Mammary epithelial cell (primary cell): ENCODE measurements at regions of chr11 and their contacts with region 1.

Region 1: GRCh38 chr11:19259487-19260345 is 19.0 kb upstream of the E2F8 start:
- DNase-seq: peak; percentile 36
- H3K4me3 ChIP-seq: no peak overlapping the region
- H3K27ac ChIP-seq: no peak overlapping the region
- H3K4me1 ChIP-seq: no peaks in the 10 kb centered on the region
- H3K27me3 ChIP-seq: no peaks in the 10 kb centered on the region
- CTCF ChIP-seq: peak; percentile 94 to 99

Region 2: GRCh38 chr11:19173004-19173689 is 86.6 kb before region 1 on chr11:
- CTCF ChIA-PET with region 1: no interaction called
- dilution Hi-C with region 1: no loop called
- in situ Hi-C with region 1: no loop called
- intact Hi-C with region 1: loop called (anchors 5 kb)
- DNase-seq: no peak
- H3K4me3 ChIP-seq: no peak overlapping the region
- H3K27ac ChIP-seq: no peak overlapping the region
- H3K4me1 ChIP-seq: no peaks in the 10 kb centered on the region
- H3K27me3 ChIP-seq: no peaks in the 10 kb centered on the region
- CTCF ChIP-seq: no peak

Region 3: GRCh38 chr11:19276859-19277808 is 17.4 kb after region 1 on chr11:
- CTCF ChIA-PET with region 1: no interaction called
- dilution Hi-C with region 1: no loop called
- in situ Hi-C with region 1: no loop called
- intact Hi-C with region 1: no loop called
- DNase-seq: peak; percentile 93
- H3K4me3 ChIP-seq: no peak overlapping the region
- H3K27ac ChIP-seq: peak overlapping the region; percentile 77
- H3K4me1 ChIP-seq: peaks cover 31% of the 10 kb centered on the region
- H3K27me3 ChIP-seq: no peaks in the 10 kb centered on the region
- CTCF ChIP-seq: no peak

Region 4: DNA sequence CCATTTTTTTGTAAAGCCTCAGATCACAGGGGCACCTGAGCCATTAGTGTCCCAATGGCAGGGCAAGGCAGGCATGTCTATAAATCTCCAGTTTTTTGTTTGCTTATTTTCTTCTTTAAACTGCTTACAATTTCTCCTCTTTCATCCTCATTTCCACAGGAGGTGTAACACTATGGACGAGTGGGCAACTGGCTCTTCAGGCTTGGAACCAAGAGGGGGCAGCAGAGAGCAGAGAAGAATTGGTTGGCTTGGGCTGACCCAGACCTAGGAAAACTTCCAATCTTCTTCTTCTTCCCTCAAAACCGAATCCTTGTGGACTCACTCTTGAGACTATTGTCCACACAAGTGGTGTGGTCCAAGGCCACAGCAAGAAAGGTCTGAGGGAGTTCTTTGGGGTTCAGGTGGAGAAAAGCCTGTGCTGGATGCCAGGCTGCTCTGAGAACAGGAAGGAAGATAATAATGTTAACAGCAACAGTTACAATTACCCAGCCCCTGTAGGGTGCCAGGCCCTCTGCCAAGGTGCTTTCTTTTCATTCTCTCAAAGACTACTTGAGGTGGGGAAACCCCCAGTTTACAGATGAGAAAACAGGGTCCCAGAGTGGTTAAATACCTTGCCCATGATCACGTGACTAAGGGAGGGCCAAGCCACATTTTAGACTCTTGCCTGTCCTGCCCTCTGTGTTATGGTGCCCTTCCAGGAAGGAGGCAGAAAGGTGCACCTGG is 51.8 kb after region 1 on chr11:
- CTCF ChIA-PET with region 1: no interaction called
- dilution Hi-C with region 1: loop called (anchors 5 kb)
- in situ Hi-C with region 1: no loop called
- intact Hi-C with region 1: loop called (anchors 1 kb)
- DNase-seq: peak; percentile 24
- H3K4me3 ChIP-seq: no peak overlapping the region
- H3K27ac ChIP-seq: no peak overlapping the region
- H3K4me1 ChIP-seq: no peaks in the 10 kb centered on the region
- H3K27me3 ChIP-seq: no peaks in the 10 kb centered on the region
- CTCF ChIP-seq: peak; percentile 89 to 95

Region 5: DNA sequence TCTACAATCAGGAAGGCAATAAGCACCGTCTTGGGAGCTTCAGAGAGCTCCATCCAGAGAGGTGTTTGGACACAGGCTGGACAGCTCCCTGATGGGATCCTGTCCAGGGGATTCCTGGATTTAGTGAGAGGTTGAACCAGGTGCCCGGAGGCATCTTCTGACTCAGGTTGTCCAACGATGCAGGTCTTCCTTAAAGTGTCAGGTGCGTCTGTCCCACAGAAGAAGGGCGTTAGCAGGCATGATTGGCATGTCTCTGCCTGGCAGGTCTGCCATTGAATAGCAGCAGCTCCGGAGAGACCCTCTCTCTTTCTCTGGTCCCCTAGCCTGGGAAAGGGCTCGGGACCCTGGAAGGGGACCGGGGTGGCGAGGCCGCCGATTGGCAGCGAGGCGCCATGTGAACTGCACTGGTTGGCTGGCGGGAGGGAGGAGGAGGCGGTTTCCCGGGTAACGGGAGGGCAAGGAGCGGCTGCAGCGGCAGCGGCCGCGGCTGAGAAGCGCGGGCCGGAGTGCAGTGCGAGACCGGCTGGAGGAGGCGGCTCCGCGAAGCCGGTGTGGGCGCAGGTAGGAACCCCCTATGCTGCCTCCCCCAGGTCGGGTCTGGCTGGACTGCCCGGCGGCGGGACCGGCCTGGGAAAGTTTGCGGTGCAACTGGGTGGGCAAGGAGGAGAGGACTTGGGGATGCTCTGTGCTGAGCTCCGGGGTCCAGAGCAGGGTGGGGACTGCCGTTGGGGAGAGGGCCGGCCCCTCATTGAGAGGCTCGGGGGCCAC is 85.2 kb after region 1 on chr11:
- CTCF ChIA-PET with region 1: no interaction called
- dilution Hi-C with region 1: no loop called
- in situ Hi-C with region 1: no loop called
- intact Hi-C with region 1: no loop called
- DNase-seq: peak; percentile 75
- H3K4me3 ChIP-seq: no peak overlapping the region
- H3K27ac ChIP-seq: no peak overlapping the region
- H3K4me1 ChIP-seq: peaks cover 17% of the 10 kb centered on the region
- H3K27me3 ChIP-seq: peaks cover 50% of the 10 kb centered on the region
- CTCF ChIP-seq: no peak

Region 6: GRCh38 chr11:19380375-19380774 is 120.7 kb after region 1 on chr11:
- CTCF ChIA-PET with region 1: no interaction called
- dilution Hi-C with region 1: no loop called
- in situ Hi-C with region 1: no loop called
- intact Hi-C with region 1: no loop called
- DNase-seq: peak; percentile 92
- H3K4me3 ChIP-seq: no peak overlapping the region
- H3K27ac ChIP-seq: peak overlapping the region; percentile 48
- H3K4me1 ChIP-seq: peaks cover 13% of the 10 kb centered on the region
- H3K27me3 ChIP-seq: no peaks in the 10 kb centered on the region
- CTCF ChIP-seq: no peak